CD8-positive, alpha-beta memory T cell (primary cell): ENCODE measurements at regions of chr2 and their contacts with region 1.

Region 1: GRCh38 chr2:207143215-207144172 is 22.3 kb downstream of the KLF7 start:
- DNase-seq: peak in 3 of 5 donors; percentile 45 to 84 (median 45)
- H3K4me3 ChIP-seq: peak overlapping the region; percentile 29
- H3K4me3 Mint-ChIP-seq: peak overlapping the region in 6 of 7 donors; percentile 39 to 70 (median 58)
- H3K27ac ChIP-seq: no peak overlapping the region
- H3K27ac Mint-ChIP-seq: peak overlapping the region; percentile 75 to 95 (median 79)
- H3K4me1 ChIP-seq: peaks cover 44% of the 10 kb centered on the region
- H3K4me1 Mint-ChIP-seq: peaks cover 32 to 52% (median 42%) of the 10 kb centered on the region in 3 donors
- H3K27me3 ChIP-seq: no peaks in the 10 kb centered on the region
- H3K27me3 Mint-ChIP-seq: peaks cover 2 to 5% of the 10 kb centered on the region in 2 donors

Region 2: DNA sequence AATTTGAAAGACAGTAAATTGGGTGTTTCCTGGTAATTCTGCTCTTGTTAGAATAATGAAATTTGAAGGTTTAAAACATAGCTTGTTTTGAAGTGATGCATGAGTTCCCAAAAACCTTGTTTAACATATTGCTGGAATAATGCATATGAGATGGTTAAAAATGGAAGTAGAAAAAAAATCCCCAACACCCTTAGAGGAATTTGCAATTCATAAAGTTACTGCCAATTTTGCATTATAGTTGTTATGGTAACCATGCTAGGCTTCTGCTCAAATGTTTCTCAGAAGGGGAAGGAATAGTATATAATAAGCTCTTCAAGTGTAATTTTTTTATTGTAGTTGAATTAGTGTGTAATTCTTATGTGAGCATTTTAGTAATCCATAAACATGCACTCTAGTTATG is 329.0 kb before region 1 on chr2:
- CTCF ChIA-PET with region 1: no interaction called
- POLR2A ChIA-PET with region 1: no interaction called
- DNase-seq: no peak
- H3K4me3 ChIP-seq: no peak overlapping the region
- H3K4me3 Mint-ChIP-seq: no peak overlapping the region
- H3K27ac ChIP-seq: no peak overlapping the region
- H3K27ac Mint-ChIP-seq: no peak overlapping the region
- H3K4me1 ChIP-seq: no peaks in the 10 kb centered on the region
- H3K4me1 Mint-ChIP-seq: no peaks in the 10 kb centered on the region
- H3K27me3 ChIP-seq: no peaks in the 10 kb centered on the region
- H3K27me3 Mint-ChIP-seq: peaks cover 3 to 7% of the 10 kb centered on the region in 2 donors

Region 3: GRCh38 chr2:206890926-206891325 is 252.6 kb before region 1 on chr2:
- CTCF ChIA-PET with region 1: no interaction called
- POLR2A ChIA-PET with region 1: no interaction called
- DNase-seq: no peak
- H3K4me3 ChIP-seq: no peak overlapping the region
- H3K4me3 Mint-ChIP-seq: no peak overlapping the region
- H3K27ac ChIP-seq: no peak overlapping the region
- H3K27ac Mint-ChIP-seq: no peak overlapping the region
- H3K4me1 ChIP-seq: no peaks in the 10 kb centered on the region
- H3K4me1 Mint-ChIP-seq: no peaks in the 10 kb centered on the region
- H3K27me3 ChIP-seq: no peaks in the 10 kb centered on the region
- H3K27me3 Mint-ChIP-seq: peaks cover 0 to 10% of the 10 kb centered on the region in 2 donors

Region 4: DNA sequence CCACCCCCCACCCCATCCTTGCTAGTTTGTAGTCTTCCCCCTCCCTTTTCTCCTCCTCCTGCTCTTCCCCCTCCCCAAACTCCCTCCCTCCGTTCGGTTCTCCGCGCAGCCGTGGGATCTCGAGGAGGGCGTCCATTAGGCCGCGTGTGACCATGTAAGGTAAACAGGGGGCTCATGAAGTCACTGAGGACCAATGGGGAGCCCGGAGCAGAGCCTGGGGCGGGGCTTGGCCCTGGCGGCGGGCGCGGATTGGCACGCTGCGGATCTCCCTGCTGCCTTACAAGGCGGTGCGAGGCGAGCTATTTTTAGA is 22.5 kb after region 1 on chr2:
- CTCF ChIA-PET with region 1: interaction called, 8 read pairs
- POLR2A ChIA-PET with region 1: interaction called, 26 read pairs
- DNase-seq: peak; percentile 81 to 98 (median 87)
- H3K4me3 ChIP-seq: peak overlapping the region; percentile 84
- H3K4me3 Mint-ChIP-seq: peak overlapping the region; percentile 84 to 92 (median 88)
- H3K27ac ChIP-seq: peak overlapping the region; percentile 85
- H3K27ac Mint-ChIP-seq: peak overlapping the region in 6 of 8 donors; percentile 11 to 96 (median 84)
- H3K4me1 ChIP-seq: peaks cover 11% of the 10 kb centered on the region
- H3K4me1 Mint-ChIP-seq: peaks cover 22 to 45% (median 33%) of the 10 kb centered on the region in 3 donors
- H3K27me3 ChIP-seq: no peaks in the 10 kb centered on the region
- H3K27me3 Mint-ChIP-seq: peaks cover 34 to 62% of the 10 kb centered on the region in 2 donors